ENCODE measurements at regions of chr12 and their contacts with region 1.

Region 1: GRCh38 chr12:31267966-31268365 is 58.0 kb downstream of the SINHCAF start:
- DNase-seq: no peak
- H3K4me3 ChIP-seq: no peak overlapping the region
- H3K27ac ChIP-seq: no peak overlapping the region
- H3K4me1 ChIP-seq: no peaks in the 10 kb centered on the region
- H3K27me3 ChIP-seq: no peaks in the 10 kb centered on the region
- CTCF ChIP-seq: no peak
- EP300 ChIP-seq: no peak
- RAD21 ChIP-seq: no peak

Region 2: GRCh38 chr12:31228811-31229792 is 38.9 kb before region 1 on chr12:
- CTCF ChIA-PET with region 1: interaction called, 55 read pairs
- POLR2A ChIA-PET with region 1: no interaction called
- DNase-seq: no peak
- H3K4me3 ChIP-seq: no peak overlapping the region
- H3K27ac ChIP-seq: no peak overlapping the region
- H3K4me1 ChIP-seq: peaks cover 0 to 45% of the 10 kb centered on the region in 2 experiments; a peak in 2 of 4 replicates
- H3K27me3 ChIP-seq: no peaks in the 10 kb centered on the region; the same call in 1 of the 2 replicates
- CTCF ChIP-seq: no peak
- EP300 ChIP-seq: no peak
- RAD21 ChIP-seq: no peak

Region 3: DNA sequence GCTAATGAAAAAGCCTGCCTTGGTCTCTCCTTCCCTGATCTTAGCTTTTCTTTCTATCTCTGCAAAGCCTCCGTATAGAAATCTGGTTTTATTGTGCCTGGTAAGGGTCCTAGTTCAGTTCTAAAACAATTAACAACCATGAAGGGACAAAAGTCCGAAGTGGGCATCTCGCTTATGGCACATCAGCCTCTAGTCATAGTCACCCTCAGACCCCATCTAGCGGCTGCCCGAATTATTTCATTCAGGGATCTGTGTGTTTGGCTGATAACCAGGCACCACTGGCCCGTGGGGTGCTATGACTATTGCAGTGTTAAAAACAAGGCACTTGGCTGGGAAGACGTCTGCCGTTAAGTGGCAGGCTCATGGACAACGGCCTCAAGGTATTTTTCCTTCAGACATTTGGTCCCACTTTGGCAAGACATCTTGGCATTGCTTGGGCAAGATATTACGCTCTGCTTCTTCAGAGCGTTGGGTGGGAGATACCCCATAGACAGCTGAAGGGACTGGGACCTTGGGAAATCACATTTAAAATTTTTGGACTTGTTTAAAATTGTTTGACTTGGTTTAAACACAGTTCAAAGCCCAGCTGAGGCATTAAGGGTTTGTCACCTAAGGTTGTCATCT is 29.1 kb before region 1 on chr12:
- CTCF ChIA-PET with region 1: interaction called, 55 read pairs
- POLR2A ChIA-PET with region 1: no interaction called
- DNase-seq: peak; percentile 76
- H3K4me3 ChIP-seq: peak overlapping the region in 1 of 2 experiments; percentile 40; a peak in 2 of 4 replicates
- H3K27ac ChIP-seq: no peak overlapping the region
- H3K4me1 ChIP-seq: peaks cover 0 to 18% of the 10 kb centered on the region in 2 experiments; a peak in 2 of 4 replicates
- H3K27me3 ChIP-seq: no peaks in the 10 kb centered on the region; the same call in 1 of the 2 replicates
- CTCF ChIP-seq: peak; percentile 77
- EP300 ChIP-seq: no peak
- RAD21 ChIP-seq: peak; percentile 85

Region 4: DNA sequence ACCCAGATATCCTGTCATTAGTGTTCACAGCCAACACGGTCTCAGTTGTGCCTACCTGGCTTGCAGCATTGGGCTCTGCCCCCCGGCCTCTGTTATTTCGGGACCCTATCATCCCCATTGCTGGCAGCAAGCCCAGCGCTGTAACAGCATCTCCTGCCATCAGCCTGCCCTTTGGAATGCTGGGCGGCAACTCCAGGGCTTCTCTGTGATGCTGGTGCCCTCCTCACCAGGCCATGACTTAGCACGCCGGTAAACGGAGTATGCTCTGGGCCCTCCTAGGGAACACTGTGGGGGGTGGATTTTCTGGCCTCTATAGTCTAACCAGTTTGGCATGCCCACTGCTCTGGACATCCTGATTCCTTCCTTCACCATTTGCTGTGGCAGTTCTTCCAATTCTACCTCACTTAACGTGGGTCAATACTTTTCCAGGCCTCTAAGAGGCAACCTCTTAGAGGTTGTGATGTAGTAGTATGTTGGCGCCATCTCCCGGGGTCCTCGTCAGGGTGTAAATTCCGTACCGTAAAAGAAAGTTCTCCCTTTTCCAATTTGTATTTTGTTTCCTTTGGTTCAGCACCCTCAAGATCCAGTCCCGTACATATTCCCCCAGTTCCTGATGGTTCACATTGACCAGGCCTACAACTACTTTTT is 22.0 kb before region 1 on chr12:
- CTCF ChIA-PET with region 1: interaction called, 46 read pairs
- POLR2A ChIA-PET with region 1: no interaction called
- DNase-seq: no peak
- H3K4me3 ChIP-seq: no peak overlapping the region
- H3K27ac ChIP-seq: no peak overlapping the region
- H3K4me1 ChIP-seq: no peaks in the 10 kb centered on the region
- H3K27me3 ChIP-seq: no peaks in the 10 kb centered on the region
- CTCF ChIP-seq: no peak
- EP300 ChIP-seq: no peak
- RAD21 ChIP-seq: no peak

Measured in SK-N-SH (cell line).